Endothelial cell of umbilical vein (primary cell): ENCODE measurements at regions of chr21 and their contacts with region 1.

Region 1: GRCh38 chr21:35204850-35205541 is 155.9 kb upstream of the RUNX1 start:
- DNase-seq: peak; percentile 96
- H3K4me3 ChIP-seq: peak overlapping the region in 1 of 3 experiments; percentile 24
- H3K27ac ChIP-seq: peak overlapping the region; percentile 53
- H3K4me1 ChIP-seq: peaks cover 35% of the 10 kb centered on the region
- H3K27me3 ChIP-seq: no peaks in the 10 kb centered on the region
- CTCF ChIP-seq: no peak
- POLR2A ChIP-seq: peak; percentile 42

Region 2: GRCh38 chr21:35226948-35227744 is 22.1 kb after region 1 on chr21:
- CTCF ChIA-PET with region 1: interaction called, 12 read pairs
- POLR2A ChIA-PET with region 1: interaction called, 7 read pairs
- dilution Hi-C with region 1: no loop called
- intact Hi-C with region 1: loop called (anchors 2 kb)
- DNase-seq: no peak
- H3K4me3 ChIP-seq: no peak overlapping the region
- H3K27ac ChIP-seq: no peak overlapping the region
- H3K4me1 ChIP-seq: peaks cover 22% of the 10 kb centered on the region
- H3K27me3 ChIP-seq: no peaks in the 10 kb centered on the region
- CTCF ChIP-seq: no peak
- POLR2A ChIP-seq: no peak

Region 3: GRCh38 chr21:35232545-35233176 is 27.7 kb after region 1 on chr21:
- CTCF ChIA-PET with region 1: interaction called, 7 read pairs
- POLR2A ChIA-PET with region 1: interaction called, 7 read pairs
- dilution Hi-C with region 1: no loop called
- intact Hi-C with region 1: loop called (anchors 2 kb)
- DNase-seq: peak; percentile 93
- H3K4me3 ChIP-seq: no peak overlapping the region
- H3K27ac ChIP-seq: peak overlapping the region; percentile 70
- H3K4me1 ChIP-seq: peaks cover 19% of the 10 kb centered on the region
- H3K27me3 ChIP-seq: no peaks in the 10 kb centered on the region
- CTCF ChIP-seq: no peak
- POLR2A ChIP-seq: no peak